ENCODE measurements at regions of chr1 and their contacts with region 1.

Region 1: DNA sequence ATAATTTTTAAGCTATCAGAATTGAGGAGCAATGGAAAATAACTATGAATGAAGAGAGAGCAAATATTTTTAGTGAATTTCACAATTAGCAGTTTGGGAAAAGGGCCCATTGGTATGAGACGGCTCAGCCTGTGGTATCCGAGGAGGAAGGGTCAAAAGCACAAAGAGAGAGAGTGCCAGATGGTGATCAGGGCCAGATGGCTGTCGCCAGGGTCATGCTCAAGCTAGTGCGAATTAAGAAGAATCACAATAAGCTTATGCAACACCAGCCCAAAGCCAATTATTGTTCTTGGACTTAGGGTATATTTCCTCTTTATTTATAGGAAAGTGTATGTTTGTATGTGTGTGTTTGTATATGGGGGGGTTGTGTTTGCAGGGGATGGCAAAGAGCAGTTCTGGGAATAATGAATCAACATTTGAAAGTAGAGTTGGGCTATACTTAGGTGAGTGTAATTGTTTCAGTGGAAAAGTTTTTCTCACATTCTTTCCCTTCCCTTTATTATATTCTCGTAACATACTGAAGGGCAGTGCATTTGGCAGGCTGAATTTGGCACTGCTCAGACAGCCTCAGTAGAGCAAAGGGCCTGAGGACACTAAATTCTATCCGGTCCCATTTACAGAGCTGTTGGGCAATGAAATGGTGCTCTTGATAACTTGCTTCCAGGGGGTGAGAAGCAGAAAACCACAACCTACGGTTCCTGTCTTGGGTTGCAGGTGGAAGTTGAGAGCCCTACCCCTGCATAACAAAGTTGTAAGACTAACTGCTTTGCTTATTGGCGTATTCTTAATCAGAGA is 19.5 kb upstream of the DDR2 start:
- DNase-seq: no peak
- H3K4me3 Mint-ChIP-seq: no peak overlapping the region
- H3K27ac Mint-ChIP-seq: no peak overlapping the region
- H3K4me1 Mint-ChIP-seq: no peaks in the 10 kb centered on the region
- H3K27me3 Mint-ChIP-seq: no peaks in the 10 kb centered on the region

Region 2: GRCh38 chr1:162596514-162597170 is 16.2 kb before region 1 on chr1:
- CTCF ChIA-PET with region 1: interaction called, 11 read pairs
- POLR2A ChIA-PET with region 1: interaction called, 3 read pairs
- DNase-seq: no peak
- H3K4me3 Mint-ChIP-seq: no peak overlapping the region
- H3K27ac Mint-ChIP-seq: no peak overlapping the region
- H3K4me1 Mint-ChIP-seq: no peaks in the 10 kb centered on the region
- H3K27me3 Mint-ChIP-seq: no peaks in the 10 kb centered on the region

Region 3: GRCh38 chr1:162631546-162632191 is 18.9 kb after region 1 on chr1:
- CTCF ChIA-PET with region 1: interaction called, 12 read pairs
- POLR2A ChIA-PET with region 1: no interaction called
- DNase-seq: no peak
- H3K4me3 Mint-ChIP-seq: no peak overlapping the region
- H3K27ac Mint-ChIP-seq: no peak overlapping the region
- H3K4me1 Mint-ChIP-seq: peaks cover 8% of the 10 kb centered on the region
- H3K27me3 Mint-ChIP-seq: peaks cover 3% of the 10 kb centered on the region

Region 4: GRCh38 chr1:162649583-162649982 is 36.8 kb after region 1 on chr1:
- CTCF ChIA-PET with region 1: no interaction called
- POLR2A ChIA-PET with region 1: no interaction called
- DNase-seq: no peak
- H3K4me3 Mint-ChIP-seq: no peak overlapping the region
- H3K27ac Mint-ChIP-seq: no peak overlapping the region
- H3K4me1 Mint-ChIP-seq: no peaks in the 10 kb centered on the region
- H3K27me3 Mint-ChIP-seq: peaks cover 10% of the 10 kb centered on the region

Measured in activated CD4-positive, alpha-beta memory T cell treated with anti-CD3 and anti-CD28 coated beads, Interleukin-2, amount 10 ng/mL, durations not matched to agents 7 days and 5 days (primary cell).